Activated CD4-positive, alpha-beta T cell treated with anti-CD3 and anti-CD28 coated beads for 36 hours (primary cell): ENCODE measurements at regions of chr3 and their contacts with region 1.

Region 1: GRCh38 chr3:158672293-158673176 is at the start of gene LXN:
- DNase-seq: peak; percentile 92
- ATAC-seq: peak; percentile 100
- H3K4me3 Mint-ChIP-seq: peak within 1 kb of the TSS; percentile 85
- H3K27ac Mint-ChIP-seq: peak within 1 kb of the TSS; percentile 91
- H3K4me1 Mint-ChIP-seq: peaks cover 18% of the 10 kb centered on the region
- H3K27me3 Mint-ChIP-seq: no peaks in the 10 kb centered on the region
- total RNA-seq, gene LXN: 12.5 to 13.9 TPM

Region 2: DNA sequence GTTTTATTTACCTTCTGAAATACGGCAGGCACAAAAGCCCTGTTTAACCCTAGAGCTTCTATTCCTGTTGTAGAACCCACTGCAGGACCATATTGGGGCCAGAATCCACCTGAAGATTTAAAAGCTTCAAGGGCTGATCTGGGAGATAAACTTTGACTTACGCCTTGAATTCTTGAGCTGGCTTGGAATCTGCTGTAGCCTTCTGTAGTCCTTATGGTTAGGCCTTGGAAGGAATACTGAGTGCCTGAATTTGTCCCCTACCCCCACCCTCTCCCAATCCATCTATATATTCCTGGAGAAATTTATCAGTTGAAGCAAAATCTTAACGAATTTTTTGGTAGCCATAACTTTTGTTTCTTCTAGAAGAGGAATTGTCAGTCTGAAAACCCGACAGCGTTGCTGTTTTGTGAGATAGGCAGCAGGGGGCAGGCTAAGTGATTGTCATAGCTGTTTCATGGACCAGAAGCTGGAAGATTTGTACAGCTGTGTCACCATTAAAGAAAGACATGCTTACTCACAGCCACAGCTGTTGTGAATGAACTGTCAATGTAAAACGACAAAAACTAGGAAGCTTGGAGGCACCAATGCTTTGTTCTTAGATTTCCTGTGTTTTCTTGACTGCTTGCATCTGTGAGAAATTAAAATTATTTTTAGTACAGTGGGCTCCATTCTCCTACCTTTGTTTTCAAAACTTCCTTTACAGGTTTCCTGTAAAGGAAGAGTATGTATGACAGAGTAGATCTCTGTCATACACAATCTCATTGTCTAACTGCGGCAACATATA is 12.9 kb before region 1 on chr3:
- CTCF ChIA-PET with region 1: interaction called, 33 read pairs
- POLR2A ChIA-PET with region 1: interaction called, 3 read pairs
- intact Hi-C with region 1: loop called in 1 of 2 experiments (anchors 1 kb)
- DNase-seq: peak; percentile 76
- ATAC-seq: peak; percentile 97
- H3K4me3 Mint-ChIP-seq: no peak overlapping the region
- H3K27ac Mint-ChIP-seq: no peak overlapping the region
- H3K4me1 Mint-ChIP-seq: peaks cover 11% of the 10 kb centered on the region
- H3K27me3 Mint-ChIP-seq: no peaks in the 10 kb centered on the region

Region 3: DNA sequence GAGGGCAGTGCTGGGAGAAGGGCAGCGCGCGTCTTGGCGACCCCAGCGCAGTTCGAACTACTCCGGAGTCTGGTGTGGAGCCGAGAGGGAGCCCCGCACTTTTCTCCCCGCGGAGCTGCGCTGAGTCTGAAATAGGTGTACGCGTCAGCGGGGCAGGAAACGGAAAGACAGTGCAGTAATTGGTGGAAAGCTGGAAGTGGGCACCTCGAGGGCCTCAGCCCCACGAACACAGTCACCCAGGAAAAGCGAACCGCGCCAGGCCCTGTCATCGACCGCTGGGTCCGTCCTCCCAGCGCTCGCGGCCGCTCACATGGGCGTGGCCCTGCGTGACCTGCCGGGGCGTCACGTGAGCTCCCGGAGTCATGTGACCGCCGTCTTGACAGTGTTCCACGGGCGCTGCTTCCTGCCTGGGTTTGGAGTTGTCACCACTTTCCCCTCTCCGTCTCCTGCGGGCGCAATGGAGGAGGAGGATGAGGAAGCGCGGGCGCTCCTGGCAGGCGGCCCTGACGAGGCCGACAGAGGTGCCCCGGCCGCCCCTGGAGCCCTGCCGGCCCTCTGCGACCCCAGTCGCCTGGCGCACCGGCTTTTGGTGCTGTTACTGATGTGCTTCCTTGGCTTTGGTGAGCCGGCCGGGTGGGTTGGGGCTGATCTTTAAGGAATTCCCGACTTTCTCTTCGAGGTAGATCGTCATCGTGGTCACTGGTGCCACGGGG is 129.3 kb after region 1 on chr3 and contains the start of gene MFSD1:
- CTCF ChIA-PET with region 1: no interaction called
- POLR2A ChIA-PET with region 1: no interaction called
- intact Hi-C with region 1: loop called in 1 of 2 experiments (anchors 1 kb)
- DNase-seq: peak; percentile 94
- ATAC-seq: peak; percentile 92
- H3K4me3 Mint-ChIP-seq: peak within 1 kb of the TSS; percentile 81
- H3K27ac Mint-ChIP-seq: peak within 1 kb of the TSS; percentile 87
- H3K4me1 Mint-ChIP-seq: peaks cover 22% of the 10 kb centered on the region
- H3K27me3 Mint-ChIP-seq: no peaks in the 10 kb centered on the region
- total RNA-seq, gene MFSD1: 6.9 to 13.1 TPM

Region 4: GRCh38 chr3:158961911-158962310 is 289.4 kb after region 1 on chr3:
- CTCF ChIA-PET with region 1: no interaction called
- POLR2A ChIA-PET with region 1: no interaction called
- intact Hi-C with region 1: no loop called
- DNase-seq: no peak
- ATAC-seq: no peak
- H3K4me3 Mint-ChIP-seq: no peak overlapping the region
- H3K27ac Mint-ChIP-seq: no peak overlapping the region
- H3K4me1 Mint-ChIP-seq: no peaks in the 10 kb centered on the region
- H3K27me3 Mint-ChIP-seq: no peaks in the 10 kb centered on the region